Activated CD4-positive, alpha-beta T cell treated with anti-CD3 and anti-CD28 coated beads for 36 hours (primary cell): ENCODE measurements at regions of chr7 and their contacts with region 1.

Region 1: DNA sequence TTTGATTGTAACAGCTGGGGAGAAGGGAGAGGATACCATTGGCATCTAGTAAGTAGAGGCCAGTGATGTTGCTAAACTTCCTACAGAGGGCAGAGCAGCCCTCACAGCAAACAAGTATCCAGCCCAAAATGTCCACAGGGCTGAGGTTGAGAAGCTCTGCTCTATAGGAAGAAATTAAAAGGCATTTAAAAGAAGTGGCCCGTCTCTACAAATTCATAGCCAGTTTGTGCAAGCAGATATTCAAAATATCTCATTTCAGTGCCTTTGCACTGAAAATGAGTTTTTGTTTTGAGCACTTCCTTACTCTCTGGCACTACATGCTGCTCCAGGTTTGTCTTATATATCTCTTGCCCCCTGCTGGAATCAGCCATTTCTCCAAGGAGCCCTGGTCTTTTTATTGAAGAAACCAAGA is 330.0 kb downstream of the BBS9 start:
- DNase-seq: no peak
- ATAC-seq: no peak
- H3K4me3 Mint-ChIP-seq: no peak overlapping the region
- H3K27ac Mint-ChIP-seq: no peak overlapping the region
- H3K4me1 Mint-ChIP-seq: no peaks in the 10 kb centered on the region
- H3K27me3 Mint-ChIP-seq: no peaks in the 10 kb centered on the region

Region 2: GRCh38 chr7:33531888-33532287 is 72.5 kb after region 1 on chr7:
- CTCF ChIA-PET with region 1: no interaction called
- POLR2A ChIA-PET with region 1: interaction called, 10 read pairs
- intact Hi-C with region 1: no loop called
- DNase-seq: no peak
- ATAC-seq: no peak
- H3K4me3 Mint-ChIP-seq: no peak overlapping the region
- H3K27ac Mint-ChIP-seq: no peak overlapping the region
- H3K4me1 Mint-ChIP-seq: no peaks in the 10 kb centered on the region
- H3K27me3 Mint-ChIP-seq: no peaks in the 10 kb centered on the region

Region 3: GRCh38 chr7:34507191-34507590 is 1047.8 kb after region 1 on chr7:
- CTCF ChIA-PET with region 1: no interaction called
- POLR2A ChIA-PET with region 1: no interaction called
- intact Hi-C with region 1: no loop called
- DNase-seq: no peak
- ATAC-seq: no peak
- H3K4me3 Mint-ChIP-seq: no peak overlapping the region
- H3K27ac Mint-ChIP-seq: no peak overlapping the region
- H3K4me1 Mint-ChIP-seq: no peaks in the 10 kb centered on the region
- H3K27me3 Mint-ChIP-seq: no peaks in the 10 kb centered on the region